AG04449 (cell line): ENCODE measurements at regions of chr16 and their contacts with region 1.

Region 1: DNA sequence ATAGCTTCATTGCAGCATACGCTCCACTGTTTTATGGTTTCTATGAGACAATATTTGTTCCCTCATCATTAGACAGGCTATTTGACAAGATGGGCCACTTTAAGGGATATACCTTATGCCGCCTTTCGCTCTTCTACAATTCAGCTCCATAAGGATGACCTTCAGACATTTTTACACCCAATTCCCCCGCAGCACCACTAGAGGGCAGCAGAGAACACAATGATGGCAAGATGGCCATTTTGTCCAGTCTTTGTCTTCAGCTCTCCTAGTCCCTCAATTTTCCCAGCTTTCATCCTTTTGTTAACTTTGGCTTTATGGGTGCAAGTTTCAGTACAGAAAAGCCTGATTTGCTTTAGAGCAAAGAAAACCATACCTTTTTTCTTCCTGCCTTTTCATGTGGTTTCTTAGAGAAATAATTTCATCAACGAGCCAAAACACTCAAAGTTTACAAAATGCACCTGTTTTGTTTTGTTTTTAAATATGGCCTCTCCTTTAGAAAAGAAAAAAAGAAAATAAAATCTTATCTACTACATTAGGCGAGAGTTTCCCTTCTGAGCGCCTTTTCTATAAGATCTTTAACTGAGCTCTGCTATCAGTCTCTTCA is 355.3 kb downstream of the TOX3 start:
- DNase-seq: peak; percentile 7
- H3K4me3 ChIP-seq: no peak overlapping the region
- CTCF ChIP-seq: peak; percentile 84

Region 2: GRCh38 chr16:52203096-52203495 is 11.5 kb after region 1 on chr16:
- CTCF ChIA-PET with region 1: interaction called, 15 read pairs
- POLR2A ChIA-PET with region 1: no interaction called
- DNase-seq: no peak
- H3K4me3 ChIP-seq: no peak overlapping the region
- CTCF ChIP-seq: no peak

Region 3: GRCh38 chr16:52251495-52251894 is 59.9 kb after region 1 on chr16:
- CTCF ChIA-PET with region 1: no interaction called
- POLR2A ChIA-PET with region 1: no interaction called
- DNase-seq: no peak
- H3K4me3 ChIP-seq: no peak overlapping the region
- CTCF ChIP-seq: no peak

Region 4: DNA sequence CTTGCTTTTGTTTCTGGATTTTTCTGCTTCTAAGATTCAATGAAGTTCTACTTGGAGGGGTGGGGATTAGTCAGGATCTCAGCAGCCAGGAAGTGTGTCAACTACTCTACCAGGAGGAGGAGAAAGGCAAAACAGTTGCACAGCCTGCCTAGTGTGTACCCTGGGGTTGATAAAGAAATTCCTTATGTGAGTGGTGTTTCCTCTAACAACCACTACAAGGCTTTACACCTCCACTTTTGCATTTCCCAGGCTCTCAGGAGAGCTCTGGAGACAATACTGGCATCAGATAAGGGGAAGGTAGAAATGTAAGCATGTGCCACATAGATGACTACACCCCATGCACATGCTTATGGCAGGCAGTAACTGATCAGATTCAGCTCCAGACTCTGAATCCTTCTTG is 180.7 kb after region 1 on chr16:
- CTCF ChIA-PET with region 1: no interaction called
- POLR2A ChIA-PET with region 1: no interaction called
- DNase-seq: no peak
- H3K4me3 ChIP-seq: no peak overlapping the region
- CTCF ChIP-seq: no peak

Region 5: GRCh38 chr16:52912565-52913173 is 721.0 kb after region 1 on chr16:
- CTCF ChIA-PET with region 1: interaction called, 25 read pairs
- POLR2A ChIA-PET with region 1: no interaction called
- DNase-seq: peak; percentile 1
- H3K4me3 ChIP-seq: no peak overlapping the region
- CTCF ChIP-seq: peak; percentile 66

Region 6: GRCh38 chr16:53022374-53022773 is 830.7 kb after region 1 on chr16:
- CTCF ChIA-PET with region 1: interaction called, 73 read pairs
- POLR2A ChIA-PET with region 1: no interaction called
- DNase-seq: no peak
- H3K4me3 ChIP-seq: no peak overlapping the region
- CTCF ChIP-seq: peak; percentile 62